Vagina (tissue), 2 donors: ENCODE measurements at regions of chr6 and their contacts with region 1.

Region 1: GRCh38 chr6:144630857-144631256 is 345.7 kb downstream of the UTRN start:
- DNase-seq: no peak
- H3K4me3 ChIP-seq: no peak overlapping the region
- H3K27ac ChIP-seq: no peak overlapping the region
- H3K4me1 ChIP-seq: no peaks in the 10 kb centered on the region
- H3K27me3 ChIP-seq: no peaks in the 10 kb centered on the region
- CTCF ChIP-seq: no peak
- POLR2A ChIP-seq: no peak

Region 2: GRCh38 chr6:142944124-142945066 is 1686.5 kb before region 1 on chr6:
- intact Hi-C with region 1: loop called (anchors 5 kb)
- DNase-seq: peak in 1 of 2 donors; percentile 94
- H3K4me3 ChIP-seq: peak overlapping the region; percentile 90 to 99
- H3K27ac ChIP-seq: peak overlapping the region; percentile 99
- H3K4me1 ChIP-seq: peaks cover 16% of the 10 kb centered on the region
- H3K27me3 ChIP-seq: no peaks in the 10 kb centered on the region
- CTCF ChIP-seq: no peak
- POLR2A ChIP-seq: peak in 1 of 2 donors; percentile 56

Region 3: GRCh38 chr6:144678844-144679243 is 48.0 kb after region 1 on chr6:
- intact Hi-C with region 1: no loop called
- DNase-seq: no peak
- H3K4me3 ChIP-seq: no peak overlapping the region
- H3K27ac ChIP-seq: no peak overlapping the region
- H3K4me1 ChIP-seq: peaks cover 16% of the 10 kb centered on the region
- H3K27me3 ChIP-seq: no peaks in the 10 kb centered on the region
- CTCF ChIP-seq: no peak
- POLR2A ChIP-seq: no peak

Region 4: DNA sequence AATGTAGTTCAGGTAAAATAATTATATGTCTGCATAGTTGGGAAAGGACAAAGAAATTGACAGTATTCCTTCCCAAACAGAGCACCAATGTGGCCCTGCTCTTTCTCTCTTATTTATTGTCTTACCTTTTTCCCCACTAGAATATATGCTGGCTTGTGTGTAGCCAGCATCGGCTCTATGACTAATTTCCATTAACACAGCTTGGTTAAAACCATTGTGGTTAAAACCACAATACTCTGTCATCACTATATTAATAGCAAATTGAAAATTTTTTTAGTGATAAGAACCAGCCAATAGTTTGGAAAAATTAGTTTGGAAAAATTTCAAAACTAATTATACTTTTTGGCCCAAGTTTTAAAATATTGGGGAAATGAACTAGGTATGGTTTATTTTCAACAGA is 189.4 kb after region 1 on chr6:
- intact Hi-C with region 1: no loop called
- DNase-seq: no peak
- H3K4me3 ChIP-seq: no peak overlapping the region
- H3K27ac ChIP-seq: no peak overlapping the region
- H3K4me1 ChIP-seq: no peaks in the 10 kb centered on the region
- H3K27me3 ChIP-seq: no peaks in the 10 kb centered on the region
- CTCF ChIP-seq: no peak
- POLR2A ChIP-seq: no peak